Caco-2 (cell line): ENCODE measurements at regions of chrX and their contacts with region 1.

Region 1: DNA sequence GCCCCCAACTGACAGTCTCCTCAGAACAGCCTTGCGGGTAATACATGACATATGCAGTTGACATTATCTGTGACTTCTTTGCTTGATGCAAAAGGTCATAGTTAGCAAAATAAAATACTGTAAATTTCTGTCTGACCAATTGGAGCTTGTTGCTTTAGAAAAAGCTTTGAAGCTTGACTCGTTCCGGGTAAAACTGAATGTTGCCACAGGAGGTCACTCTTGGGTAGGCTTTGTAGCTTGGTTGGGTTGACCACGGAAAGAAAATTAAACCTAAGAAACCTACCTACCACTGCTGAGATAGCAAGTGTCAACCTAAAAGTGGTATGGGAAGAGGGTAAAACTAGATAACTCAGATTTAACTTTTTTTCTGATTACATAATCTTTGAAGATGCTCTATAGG is 23.2 kb downstream of the PRPS2 start:
- DNase-seq: peak; percentile 39 to 59
- H3K4me3 ChIP-seq: no peak overlapping the region
- H3K4me3 Mint-ChIP-seq: no peak overlapping the region
- H3K27ac Mint-ChIP-seq: no peak overlapping the region
- H3K4me1 ChIP-seq: no peaks in the 10 kb centered on the region
- H3K4me1 Mint-ChIP-seq: no peaks in the 10 kb centered on the region
- H3K27me3 ChIP-seq: no peaks in the 10 kb centered on the region
- H3K27me3 Mint-ChIP-seq: no peaks in the 10 kb centered on the region
- CTCF ChIP-seq: peak in 1 of 2 experiments; percentile 49

Region 2: GRCh38 chrX:12383196-12383595 is 431.2 kb before region 1 on chrX:
- CTCF ChIA-PET with region 1: no interaction called
- POLR2A ChIA-PET with region 1: no interaction called
- intact Hi-C with region 1: no loop called
- DNase-seq: peak in 1 of 2 experiments; percentile 7
- H3K4me3 ChIP-seq: no peak overlapping the region
- H3K4me3 Mint-ChIP-seq: no peak overlapping the region
- H3K27ac Mint-ChIP-seq: no peak overlapping the region
- H3K4me1 ChIP-seq: no peaks in the 10 kb centered on the region
- H3K4me1 Mint-ChIP-seq: no peaks in the 10 kb centered on the region
- H3K27me3 ChIP-seq: no peaks in the 10 kb centered on the region
- H3K27me3 Mint-ChIP-seq: peaks cover 9% of the 10 kb centered on the region
- CTCF ChIP-seq: peak; percentile 21 to 43

Region 3: GRCh38 chrX:12894074-12895030 is 79.9 kb after region 1 on chrX:
- CTCF ChIA-PET with region 1: interaction called, 7 read pairs
- POLR2A ChIA-PET with region 1: no interaction called
- intact Hi-C with region 1: loop called (anchors 1 kb)
- DNase-seq: peak; percentile 32 to 44
- H3K4me3 ChIP-seq: no peak overlapping the region
- H3K4me3 Mint-ChIP-seq: no peak overlapping the region
- H3K27ac Mint-ChIP-seq: no peak overlapping the region
- H3K4me1 ChIP-seq: no peaks in the 10 kb centered on the region
- H3K4me1 Mint-ChIP-seq: no peaks in the 10 kb centered on the region
- H3K27me3 ChIP-seq: no peaks in the 10 kb centered on the region
- H3K27me3 Mint-ChIP-seq: no peaks in the 10 kb centered on the region
- CTCF ChIP-seq: peak; percentile 58 to 78

Region 4: DNA sequence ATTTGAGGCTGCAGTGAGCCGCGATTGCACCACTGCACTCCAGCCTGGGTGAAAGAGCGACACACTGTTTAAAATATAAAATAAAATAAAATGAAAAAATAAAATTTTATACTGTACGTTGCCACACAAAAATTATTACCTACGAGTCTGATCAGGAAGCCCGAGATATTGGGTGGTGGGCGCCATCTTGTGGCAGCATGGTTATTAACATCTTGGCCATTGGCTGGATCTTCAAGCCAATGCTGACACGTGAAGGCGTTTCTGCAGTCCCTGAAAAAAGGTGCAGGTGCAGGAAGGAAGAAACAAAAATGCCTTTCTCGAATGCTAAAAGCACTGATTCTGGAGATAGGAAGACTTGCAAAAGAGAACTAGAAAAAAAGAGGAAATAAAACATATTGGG is 87.1 kb after region 1 on chrX:
- CTCF ChIA-PET with region 1: interaction called, 12 read pairs
- POLR2A ChIA-PET with region 1: no interaction called
- intact Hi-C with region 1: loop called (anchors 1 kb)
- DNase-seq: peak; percentile 46 to 70
- H3K4me3 ChIP-seq: no peak overlapping the region
- H3K4me3 Mint-ChIP-seq: no peak overlapping the region
- H3K27ac Mint-ChIP-seq: no peak overlapping the region
- H3K4me1 ChIP-seq: no peaks in the 10 kb centered on the region
- H3K4me1 Mint-ChIP-seq: no peaks in the 10 kb centered on the region
- H3K27me3 ChIP-seq: no peaks in the 10 kb centered on the region
- H3K27me3 Mint-ChIP-seq: no peaks in the 10 kb centered on the region
- CTCF ChIP-seq: peak; percentile 50 to 58